Adrenal gland (tissue), 19 donors: ENCODE measurements at regions of chr10 and their contacts with region 1.

Region 1: DNA sequence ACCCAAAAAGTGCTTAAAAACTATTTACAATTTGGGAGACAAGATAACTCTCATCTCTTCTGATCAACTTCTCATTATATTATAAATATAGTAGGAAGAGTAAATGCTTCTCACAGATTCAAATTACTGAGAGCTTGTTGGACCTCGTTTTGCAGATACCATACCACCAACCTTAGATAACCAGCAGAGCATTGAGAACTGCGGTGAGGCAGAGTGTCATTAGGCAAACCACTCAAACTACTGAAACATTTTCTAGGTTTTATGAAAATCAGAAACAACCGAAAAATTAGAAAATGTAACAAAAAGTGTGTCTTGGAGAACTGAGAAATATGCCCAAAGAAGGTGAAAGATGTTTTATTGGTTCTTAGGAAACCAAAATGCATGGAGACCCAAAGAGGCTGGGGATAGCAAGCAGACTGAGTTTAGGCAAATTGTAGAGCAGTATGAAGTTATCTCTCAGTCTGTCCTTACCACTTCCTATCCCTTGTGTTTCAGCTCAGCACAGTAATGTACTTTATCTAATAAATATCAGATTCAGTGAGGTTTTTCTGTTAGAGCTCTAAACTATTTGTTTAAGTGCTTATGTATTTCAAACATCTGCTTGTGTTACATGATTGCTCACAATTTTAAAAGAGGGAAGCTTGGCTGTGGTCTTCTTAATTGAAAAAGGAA is 77.9 kb downstream of the HECTD2 start:
- DNase-seq: no peak
- H3K4me3 ChIP-seq: no peak overlapping the region
- H3K27ac ChIP-seq: no peak overlapping the region
- H3K4me1 ChIP-seq: no peaks in the 10 kb centered on the region
- H3K27me3 ChIP-seq: no peaks in the 10 kb centered on the region
- CTCF ChIP-seq: no peak
- POLR2A ChIP-seq: no peak

Region 2: GRCh38 chr10:91541481-91541880 is 53.4 kb after region 1 on chr10:
- intact Hi-C with region 1: loop called in 1 of 2 experiments (anchors 10 kb)
- DNase-seq: peak in 1 of 7 donors; percentile 33
- H3K4me3 ChIP-seq: no peak overlapping the region
- H3K27ac ChIP-seq: no peak overlapping the region
- H3K4me1 ChIP-seq: no peaks in the 10 kb centered on the region
- H3K27me3 ChIP-seq: no peaks in the 10 kb centered on the region
- CTCF ChIP-seq: no peak
- POLR2A ChIP-seq: no peak

Region 3: DNA sequence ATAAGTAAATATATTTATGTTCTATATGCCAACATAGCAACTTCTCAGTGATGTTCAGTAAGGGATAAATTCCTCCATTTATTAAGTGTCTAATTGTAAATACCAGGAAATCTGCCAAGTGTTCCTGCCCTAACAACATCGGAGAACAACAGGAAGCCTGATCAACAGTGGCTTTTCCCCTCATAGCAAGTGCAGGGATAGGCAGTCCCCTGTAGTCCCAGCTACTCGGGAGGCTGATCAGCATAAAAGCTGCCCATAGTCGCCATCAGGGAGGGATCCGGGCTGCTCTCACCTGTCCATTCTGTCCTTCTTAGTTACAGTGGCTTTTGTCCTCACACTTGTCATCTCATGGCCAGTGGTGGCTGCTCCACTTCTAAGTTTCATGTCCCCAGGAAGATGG is 944.5 kb after region 1 on chr10:
- intact Hi-C with region 1: no loop called
- DNase-seq: no peak
- H3K4me3 ChIP-seq: no peak overlapping the region
- H3K27ac ChIP-seq: no peak overlapping the region
- H3K4me1 ChIP-seq: no peaks in the 10 kb centered on the region
- H3K27me3 ChIP-seq: no peaks in the 10 kb centered on the region
- CTCF ChIP-seq: no peak
- POLR2A ChIP-seq: no peak